A549 (cell line): ENCODE measurements at regions of chr1 and their contacts with region 1.

Region 1: DNA sequence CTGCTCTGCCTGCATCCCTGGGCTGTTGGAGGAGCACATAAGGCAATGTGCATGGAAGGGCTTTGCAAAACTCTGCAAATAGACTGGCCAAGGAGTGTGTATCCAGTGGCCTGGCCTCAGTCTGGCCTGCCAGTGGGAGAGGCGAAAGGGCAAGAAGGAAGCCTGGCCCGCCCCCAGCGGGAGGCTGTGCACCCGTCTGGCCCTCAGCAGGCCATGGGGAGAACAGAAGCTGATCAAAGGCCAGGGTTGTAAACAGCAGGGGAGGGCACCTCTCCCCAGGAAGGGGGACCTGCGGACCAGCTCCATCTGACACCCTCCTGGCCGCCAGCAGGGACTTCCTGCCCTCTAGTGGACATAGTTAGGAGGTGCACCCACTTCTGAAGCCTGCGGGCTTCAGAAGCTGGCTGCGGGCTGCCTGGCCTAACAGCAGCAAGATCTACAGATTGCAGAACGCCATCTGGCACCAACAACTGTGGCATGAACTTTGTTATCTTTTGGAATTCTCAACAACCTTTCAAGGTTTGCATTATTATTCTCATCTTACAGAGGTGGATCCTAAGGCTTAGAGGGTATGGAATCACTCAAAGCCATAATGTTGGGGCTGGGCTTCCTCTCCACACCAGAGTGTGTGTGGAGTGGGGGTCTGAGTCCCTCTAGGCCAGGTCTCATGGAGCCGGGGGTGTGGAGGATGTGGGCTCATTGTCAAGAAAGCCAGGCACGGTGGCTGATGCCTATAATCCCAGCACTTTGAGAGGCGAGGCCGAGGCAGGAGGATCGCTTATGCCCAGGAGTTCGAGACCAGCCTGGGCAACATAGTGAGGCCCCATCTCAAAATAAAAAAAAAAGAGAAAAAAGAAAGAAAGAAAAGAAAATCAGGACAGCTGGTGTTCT is 18.9 kb upstream of the CDK18 start:
- DNase-seq: peak; percentile 75 to 94
- ATAC-seq: peak; percentile 75 to 89
- H3K4me3 ChIP-seq: no peak overlapping the region
- H3K27ac ChIP-seq: no peak overlapping the region
- H3K4me1 ChIP-seq: no peaks in the 10 kb centered on the region
- CTCF ChIP-seq: peak; percentile 92
- EP300 ChIP-seq: no peak
- POLR2A ChIP-seq: no peak
- RAD21 ChIP-seq: peak; percentile 92 to 93

Region 2: GRCh38 chr1:205273551-205273982 is 212.0 kb before region 1 on chr1:
- CTCF ChIA-PET with region 1: interaction called, 15 read pairs
- POLR2A ChIA-PET with region 1: interaction called, 3 read pairs
- DNase-seq: peak; percentile 87 to 96
- ATAC-seq: peak; percentile 77 to 86
- H3K4me3 ChIP-seq: no peak overlapping the region
- H3K27ac ChIP-seq: peak overlapping the region; percentile 83 to 93
- H3K4me1 ChIP-seq: peaks cover 67% of the 10 kb centered on the region
- CTCF ChIP-seq: peak; percentile 98
- EP300 ChIP-seq: no peak
- POLR2A ChIP-seq: no peak
- RAD21 ChIP-seq: peak; percentile 99 to 100

Region 3: GRCh38 chr1:205354259-205354904 is 131.2 kb before region 1 on chr1:
- CTCF ChIA-PET with region 1: interaction called, 191 read pairs
- POLR2A ChIA-PET with region 1: no interaction called
- DNase-seq: peak; percentile 35 to 76
- ATAC-seq: peak; percentile 65 to 83; a peak in 4 of 6 replicates
- H3K4me3 ChIP-seq: no peak overlapping the region
- H3K27ac ChIP-seq: no peak overlapping the region; a peak in 1 of 6 replicates
- H3K4me1 ChIP-seq: peaks cover 25% of the 10 kb centered on the region
- CTCF ChIP-seq: peak; percentile 86
- EP300 ChIP-seq: no peak
- POLR2A ChIP-seq: no peak
- RAD21 ChIP-seq: peak; percentile 74 to 79

Region 4: GRCh38 chr1:205391386-205391785 is 94.2 kb before region 1 on chr1:
- CTCF ChIA-PET with region 1: interaction called, 94 read pairs
- POLR2A ChIA-PET with region 1: no interaction called
- DNase-seq: no peak
- ATAC-seq: no peak
- H3K4me3 ChIP-seq: no peak overlapping the region
- H3K27ac ChIP-seq: no peak overlapping the region
- H3K4me1 ChIP-seq: no peaks in the 10 kb centered on the region
- CTCF ChIP-seq: no peak
- EP300 ChIP-seq: no peak
- POLR2A ChIP-seq: no peak
- RAD21 ChIP-seq: no peak

Region 5: DNA sequence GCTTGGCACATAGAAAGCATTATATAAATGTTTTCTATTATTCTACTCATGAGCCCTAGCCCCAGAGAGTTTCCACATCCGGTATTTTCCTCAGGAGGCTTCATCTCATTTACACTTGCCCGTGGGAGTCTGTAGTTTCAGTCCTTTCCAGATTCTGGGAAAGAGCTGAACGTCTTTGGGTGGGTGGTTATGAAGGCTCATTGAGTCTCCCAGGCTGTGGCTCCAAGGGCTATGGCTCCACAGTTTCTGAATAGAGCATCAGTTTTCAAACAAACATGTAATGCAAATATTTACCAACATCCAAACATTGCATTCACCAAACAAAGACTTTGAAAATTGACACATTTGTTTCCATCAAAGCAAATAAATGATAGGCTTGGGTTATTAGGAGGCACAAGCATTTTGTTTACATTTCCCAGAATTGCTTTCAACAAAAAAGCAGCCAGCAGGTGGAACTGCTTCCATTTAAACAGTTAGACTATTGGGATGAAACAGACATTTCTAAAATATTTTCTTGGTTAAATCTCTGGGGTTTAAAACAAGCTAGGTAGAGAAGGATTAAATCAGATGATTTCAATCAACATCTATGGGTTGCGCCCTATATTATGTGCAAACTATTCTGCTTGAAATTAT is 62.5 kb before region 1 on chr1:
- CTCF ChIA-PET with region 1: interaction called, 20 read pairs
- POLR2A ChIA-PET with region 1: no interaction called
- DNase-seq: no peak
- ATAC-seq: no peak
- H3K4me3 ChIP-seq: no peak overlapping the region
- H3K27ac ChIP-seq: no peak overlapping the region
- H3K4me1 ChIP-seq: no peaks in the 10 kb centered on the region
- CTCF ChIP-seq: 0 out of 3 replicates have a peak, but pooled peaks have one; percentile 9
- EP300 ChIP-seq: no peak
- POLR2A ChIP-seq: no peak
- RAD21 ChIP-seq: no peak

Region 6: GRCh38 chr1:205458777-205459566 is 26.6 kb before region 1 on chr1:
- CTCF ChIA-PET with region 1: interaction called, 63 read pairs
- POLR2A ChIA-PET with region 1: no interaction called
- DNase-seq: peak in 1 of 2 experiments; percentile 43
- ATAC-seq: peak; percentile 60 to 68; a peak in 5 of 6 replicates
- H3K4me3 ChIP-seq: no peak overlapping the region
- H3K27ac ChIP-seq: no peak overlapping the region
- H3K4me1 ChIP-seq: peaks cover 15% of the 10 kb centered on the region
- CTCF ChIP-seq: no peak
- EP300 ChIP-seq: no peak
- POLR2A ChIP-seq: no peak
- RAD21 ChIP-seq: no peak

Region 7: DNA sequence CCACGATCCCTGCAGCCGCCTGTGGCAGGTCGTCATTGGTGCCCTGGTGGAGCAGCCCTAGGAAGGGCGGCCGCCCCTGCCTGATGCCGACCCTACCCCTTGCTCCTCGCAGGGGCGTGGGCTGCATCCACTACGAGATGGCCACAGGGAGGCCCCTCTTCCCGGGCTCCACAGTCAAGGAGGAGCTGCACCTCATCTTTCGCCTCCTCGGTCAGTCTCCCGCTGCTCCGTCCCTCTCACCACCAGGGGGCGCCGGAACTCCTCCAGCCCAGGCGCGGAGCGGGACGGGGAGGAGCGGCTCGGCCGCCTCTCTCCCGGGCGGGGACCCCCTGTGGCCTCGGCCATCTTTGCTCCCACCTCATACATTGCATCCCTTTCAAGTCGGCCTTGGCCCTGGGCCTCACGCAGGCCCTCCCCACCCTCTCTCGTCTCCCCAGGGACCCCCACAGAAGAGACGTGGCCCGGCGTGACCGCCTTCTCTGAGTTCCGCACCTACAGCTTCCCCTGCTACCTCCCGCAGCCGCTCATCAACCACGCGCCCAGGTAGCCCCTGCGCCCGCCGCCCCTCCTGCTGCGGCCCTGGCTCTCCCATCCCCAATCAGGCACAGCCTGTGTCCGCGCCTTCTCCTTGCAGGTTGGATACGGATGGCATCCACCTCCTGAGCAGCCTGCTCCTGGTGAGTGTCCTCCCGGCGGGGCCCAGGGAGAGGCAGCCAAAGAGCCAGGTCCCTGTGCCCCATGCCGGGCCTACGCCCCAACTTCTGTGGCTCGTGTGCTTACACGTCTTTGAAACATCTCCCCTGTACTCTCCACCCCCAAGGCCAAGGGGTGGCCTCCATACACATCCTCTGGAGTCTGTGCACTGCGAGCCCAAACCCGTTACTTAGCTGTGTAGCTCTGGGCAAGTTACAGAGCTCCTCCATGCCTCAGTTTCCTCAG is 43.6 kb after region 1 on chr1:
- CTCF ChIA-PET with region 1: interaction called, 560 read pairs
- POLR2A ChIA-PET with region 1: interaction called, 6 read pairs
- DNase-seq: peak; percentile 66 to 88
- ATAC-seq: peak; percentile 78 to 93
- H3K4me3 ChIP-seq: peak overlapping the region; percentile 42
- H3K27ac ChIP-seq: peak overlapping the region; percentile 42 to 77; a peak in 4 of 6 replicates
- H3K4me1 ChIP-seq: 0 out of 3 replicates have a peak, but pooled peaks cover 3% of the 10 kb centered on the region
- CTCF ChIP-seq: peak; percentile 90
- EP300 ChIP-seq: no peak
- POLR2A ChIP-seq: no peak
- RAD21 ChIP-seq: peak; percentile 82 to 85

Region 8: DNA sequence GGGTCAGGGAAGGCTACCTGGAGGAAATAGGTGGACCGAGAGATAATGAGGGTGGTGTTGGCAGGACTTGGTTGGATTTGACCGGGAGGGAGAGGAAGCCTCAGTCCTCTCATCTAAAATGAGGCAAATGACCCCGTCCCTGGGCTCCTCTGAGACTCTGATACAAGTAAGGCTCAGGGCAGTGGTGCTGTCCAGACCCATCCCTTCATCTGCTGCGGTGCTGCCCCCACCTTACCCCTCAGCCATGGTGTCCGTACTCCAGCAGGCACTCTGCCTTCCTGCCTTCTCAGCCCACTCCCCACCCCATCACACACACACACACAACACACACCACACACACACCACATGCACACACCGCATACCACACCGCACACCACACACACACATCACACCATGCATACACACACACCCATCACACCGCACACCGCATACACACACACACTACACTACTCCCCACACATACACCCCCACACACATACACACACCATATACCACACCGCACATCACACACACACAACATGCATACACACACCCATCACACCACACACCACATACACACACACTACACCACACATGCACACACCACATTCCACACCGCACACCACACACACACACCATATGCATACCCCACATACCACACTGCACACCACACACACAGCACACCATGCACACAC is 487.0 kb after region 1 on chr1:
- CTCF ChIA-PET with region 1: no interaction called
- POLR2A ChIA-PET with region 1: no interaction called
- DNase-seq: peak in 1 of 2 experiments; percentile 18
- ATAC-seq: peak in 1 of 2 experiments; percentile 51; a peak in 3 of 6 replicates
- H3K4me3 ChIP-seq: no peak overlapping the region
- H3K27ac ChIP-seq: peak overlapping the region in 1 of 2 experiments; percentile 28; a peak in 1 of 6 replicates
- H3K4me1 ChIP-seq: peaks cover 24% of the 10 kb centered on the region
- CTCF ChIP-seq: no peak
- EP300 ChIP-seq: no peak
- POLR2A ChIP-seq: no peak
- RAD21 ChIP-seq: no peak